ENCODE measurements at regions of chr5 and their contacts with region 1.

Region 1: DNA sequence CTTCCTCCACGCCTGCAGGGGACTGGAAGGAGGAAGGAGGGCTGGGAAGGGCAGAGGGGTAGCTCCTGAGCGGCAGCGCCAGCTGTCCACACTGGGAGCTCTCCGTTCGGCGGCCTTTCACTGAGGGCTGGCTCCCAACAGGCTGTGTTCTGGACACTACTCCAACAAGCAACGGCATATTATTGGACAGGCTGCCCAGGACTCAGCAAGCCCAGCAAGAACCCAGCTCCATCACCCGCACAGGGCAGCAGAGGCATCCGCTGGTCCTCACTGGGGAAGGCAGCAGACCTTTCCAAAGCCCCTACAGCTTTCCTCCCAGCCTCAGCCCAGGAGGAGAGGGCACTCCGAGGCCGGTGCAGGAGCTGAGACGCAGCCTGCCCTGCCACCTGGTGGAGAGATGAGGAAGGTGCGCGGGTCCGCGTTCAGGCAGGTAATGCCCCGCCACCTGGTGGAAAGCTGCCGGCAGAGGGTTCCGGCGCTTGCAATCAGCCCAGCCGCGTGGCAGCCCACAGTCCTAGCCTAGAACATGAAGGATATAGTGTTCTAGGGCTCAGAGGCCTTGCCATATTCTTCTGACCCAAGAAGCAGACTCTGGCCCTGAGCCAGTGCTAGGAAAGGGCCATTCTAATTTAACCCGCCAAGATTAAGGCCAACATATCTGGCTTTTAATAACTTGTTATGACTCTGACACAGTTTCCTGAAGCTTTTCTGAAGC is 74.4 kb downstream of the NRG2 start:
- DNase-seq: peak; percentile 94
- H3K27ac ChIP-seq: no peak overlapping the region
- CTCF ChIP-seq: peak; percentile 100

Region 2: DNA sequence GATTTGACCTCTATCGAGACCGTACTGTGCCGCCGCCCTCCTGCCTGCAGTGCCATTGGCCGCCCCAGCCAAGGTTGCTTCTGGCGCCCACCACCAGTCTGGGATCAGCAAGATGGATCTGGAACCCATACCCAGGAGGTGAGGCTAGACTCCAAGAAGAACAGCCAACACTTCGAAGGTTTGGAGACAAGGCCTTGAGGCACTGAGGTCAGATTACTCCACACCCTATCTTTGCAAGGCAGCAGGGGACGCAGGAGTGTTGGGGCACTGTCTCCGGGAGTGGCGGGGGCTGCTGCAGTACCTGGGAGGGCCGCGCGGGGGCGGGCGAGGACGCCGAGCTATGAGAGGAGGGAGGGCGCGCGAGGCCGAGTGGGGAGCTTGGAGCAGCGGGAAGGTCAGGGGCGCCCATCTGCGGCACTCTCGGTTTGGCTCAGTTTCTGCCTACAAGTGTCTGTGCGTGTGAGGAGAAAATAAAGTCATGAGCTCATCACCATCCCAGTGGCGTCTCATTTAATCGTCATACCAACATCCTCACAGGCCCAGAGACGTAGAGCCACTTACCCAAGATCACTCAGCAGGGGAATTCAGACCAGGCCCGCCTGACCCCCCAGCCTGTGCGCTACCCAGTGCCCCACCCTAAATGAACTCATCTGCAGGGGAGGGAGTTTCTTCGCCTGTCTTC is 193.6 kb before region 1 on chr5:
- CTCF ChIA-PET with region 1: interaction called, 28 read pairs
- POLR2A ChIA-PET with region 1: no interaction called
- DNase-seq: peak; percentile 71
- H3K27ac ChIP-seq: no peak overlapping the region
- CTCF ChIP-seq: peak; percentile 90

Region 3: GRCh38 chr5:139808493-139809139 is 160.1 kb before region 1 on chr5:
- CTCF ChIA-PET with region 1: interaction called, 24 read pairs
- POLR2A ChIA-PET with region 1: no interaction called
- DNase-seq: peak; percentile 61
- H3K27ac ChIP-seq: no peak overlapping the region
- CTCF ChIP-seq: no peak

Region 4: DNA sequence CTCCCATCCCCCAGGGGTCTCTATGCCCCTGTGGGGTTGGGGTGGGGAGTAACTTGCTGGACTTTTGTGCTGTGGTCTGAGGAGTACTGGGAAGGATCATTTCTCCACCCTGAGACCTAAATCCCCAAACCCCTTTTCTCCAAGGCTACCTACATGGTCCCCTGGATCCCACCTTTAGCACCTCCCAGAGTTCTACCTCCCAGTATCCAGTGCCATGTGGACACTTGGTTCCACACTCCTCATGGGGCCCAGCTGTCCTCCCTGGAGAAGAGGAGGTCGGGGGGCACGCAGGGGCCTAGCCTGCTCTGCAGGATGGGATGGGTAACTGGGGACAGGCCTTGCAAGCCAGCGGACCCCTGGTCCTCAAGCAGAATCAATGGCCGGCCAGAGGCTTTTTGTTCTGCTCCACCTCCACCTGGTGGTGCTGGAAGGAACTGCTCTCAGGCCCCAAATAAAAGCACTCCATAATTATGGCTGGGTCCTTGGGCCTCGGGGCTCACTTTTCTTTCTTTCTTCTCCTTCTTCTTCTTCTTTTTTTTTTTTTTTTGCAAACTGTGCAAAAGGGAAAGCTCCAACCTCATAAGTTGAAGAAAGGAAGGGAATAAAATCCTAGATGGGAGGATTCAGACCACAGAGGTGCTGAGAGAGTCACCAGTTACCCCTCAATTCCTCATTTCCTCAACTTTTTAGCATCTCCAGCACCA is 104.7 kb before region 1 on chr5:
- CTCF ChIA-PET with region 1: interaction called, 12 read pairs
- POLR2A ChIA-PET with region 1: no interaction called
- DNase-seq: peak; percentile 84
- H3K27ac ChIP-seq: peak overlapping the region; percentile 85
- CTCF ChIP-seq: peak; percentile 91

Region 5: DNA sequence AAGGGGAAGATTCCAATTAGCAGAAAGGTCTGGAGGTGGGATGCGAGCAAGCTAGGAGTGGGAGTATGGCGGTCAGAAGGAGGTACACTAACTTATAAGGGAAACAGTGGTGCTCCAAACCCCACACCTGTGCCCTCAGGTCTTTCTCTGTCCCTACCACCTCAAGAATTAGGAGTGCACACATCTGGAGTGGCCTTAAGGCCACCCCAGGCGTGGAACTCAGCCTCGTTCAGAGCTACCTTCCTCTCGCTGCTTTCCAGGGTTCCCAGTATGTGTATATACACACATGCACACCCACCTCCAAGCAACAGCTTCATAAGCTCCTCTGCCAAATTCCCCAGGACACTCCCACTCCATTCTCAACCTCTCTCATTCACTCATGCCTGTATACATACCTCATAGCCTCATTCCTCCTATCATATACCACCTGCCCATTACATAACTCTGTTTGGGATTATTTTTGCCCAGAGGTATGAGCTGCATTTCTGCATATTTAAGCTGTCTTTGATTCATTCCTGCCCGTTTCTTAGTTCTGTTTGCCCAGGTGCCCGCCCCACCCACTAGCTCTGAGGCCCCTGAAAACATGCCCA is 54.4 kb before region 1 on chr5:
- CTCF ChIA-PET with region 1: interaction called, 10 read pairs
- POLR2A ChIA-PET with region 1: no interaction called
- DNase-seq: peak; percentile 43
- H3K27ac ChIP-seq: no peak overlapping the region
- CTCF ChIP-seq: no peak

Region 6: GRCh38 chr5:140000332-140000731 is 31.6 kb after region 1 on chr5:
- CTCF ChIA-PET with region 1: interaction called, 11 read pairs
- POLR2A ChIA-PET with region 1: no interaction called
- DNase-seq: no peak
- H3K27ac ChIP-seq: no peak overlapping the region
- CTCF ChIP-seq: no peak

Region 7: DNA sequence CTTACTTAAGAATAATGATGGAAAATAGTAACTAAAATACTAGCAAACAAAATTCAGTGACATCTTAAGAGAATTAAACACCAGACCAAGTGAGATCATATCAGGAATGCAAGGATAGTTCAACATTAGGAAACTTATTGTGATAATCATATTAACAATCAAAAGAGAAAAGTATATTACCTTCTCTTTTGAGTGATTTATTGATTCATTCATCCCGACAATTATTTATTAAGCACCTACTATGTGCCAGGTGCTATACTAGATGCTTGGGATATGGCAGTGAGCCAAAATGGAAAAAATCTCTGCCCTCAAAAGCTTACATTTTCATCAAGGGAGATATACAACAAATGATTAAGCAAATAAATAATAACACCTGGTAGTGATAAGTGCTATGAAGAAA is 121.5 kb after region 1 on chr5:
- CTCF ChIA-PET with region 1: no interaction called
- POLR2A ChIA-PET with region 1: no interaction called
- DNase-seq: no peak
- H3K27ac ChIP-seq: no peak overlapping the region
- CTCF ChIP-seq: no peak